Activated B cell treated with CpG ODN at 0.5 μM for 24 hours (primary cell): ENCODE measurements at regions of chr1 and their contacts with region 1.

Region 1: DNA sequence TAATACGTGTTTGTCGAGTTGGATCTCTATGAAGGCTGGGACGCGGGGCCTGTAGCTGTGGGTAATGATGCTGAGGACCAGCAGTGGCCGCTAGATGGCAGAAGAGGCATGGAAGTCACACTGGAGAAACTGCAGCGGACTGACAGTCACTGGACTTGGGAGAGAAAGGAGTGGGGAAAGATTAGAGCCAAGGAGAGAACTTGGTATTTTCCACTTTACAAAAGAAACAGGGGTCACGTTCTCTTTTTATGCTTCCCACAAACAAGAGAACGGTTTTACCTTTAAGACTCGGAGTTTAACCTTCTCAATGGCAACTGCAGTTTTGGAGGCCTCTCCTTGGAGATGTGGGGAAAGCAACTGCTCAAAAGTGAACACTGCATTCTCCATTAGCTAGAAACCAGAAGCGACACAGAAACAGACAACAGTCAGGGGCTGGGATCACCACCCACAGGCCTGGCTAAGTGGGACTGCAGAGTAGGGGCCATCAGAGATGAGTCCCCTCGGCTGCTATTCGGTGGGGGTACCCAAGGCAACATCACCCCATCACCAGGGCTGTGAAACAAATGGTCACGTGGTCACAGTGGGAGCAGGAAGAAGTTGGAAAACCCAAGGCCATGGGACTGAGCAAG is 51.1 kb upstream of the EDEM3 start:
- DNase-seq: peak; percentile 62
- ATAC-seq: peak; percentile 93
- H3K4me3 Mint-ChIP-seq: no peak overlapping the region
- H3K27ac Mint-ChIP-seq: peak overlapping the region; percentile 48
- H3K4me1 Mint-ChIP-seq: peaks cover 13% of the 10 kb centered on the region
- H3K27me3 Mint-ChIP-seq: no peaks in the 10 kb centered on the region
- CTCF ChIP-seq: peak; percentile 82

Region 2: DNA sequence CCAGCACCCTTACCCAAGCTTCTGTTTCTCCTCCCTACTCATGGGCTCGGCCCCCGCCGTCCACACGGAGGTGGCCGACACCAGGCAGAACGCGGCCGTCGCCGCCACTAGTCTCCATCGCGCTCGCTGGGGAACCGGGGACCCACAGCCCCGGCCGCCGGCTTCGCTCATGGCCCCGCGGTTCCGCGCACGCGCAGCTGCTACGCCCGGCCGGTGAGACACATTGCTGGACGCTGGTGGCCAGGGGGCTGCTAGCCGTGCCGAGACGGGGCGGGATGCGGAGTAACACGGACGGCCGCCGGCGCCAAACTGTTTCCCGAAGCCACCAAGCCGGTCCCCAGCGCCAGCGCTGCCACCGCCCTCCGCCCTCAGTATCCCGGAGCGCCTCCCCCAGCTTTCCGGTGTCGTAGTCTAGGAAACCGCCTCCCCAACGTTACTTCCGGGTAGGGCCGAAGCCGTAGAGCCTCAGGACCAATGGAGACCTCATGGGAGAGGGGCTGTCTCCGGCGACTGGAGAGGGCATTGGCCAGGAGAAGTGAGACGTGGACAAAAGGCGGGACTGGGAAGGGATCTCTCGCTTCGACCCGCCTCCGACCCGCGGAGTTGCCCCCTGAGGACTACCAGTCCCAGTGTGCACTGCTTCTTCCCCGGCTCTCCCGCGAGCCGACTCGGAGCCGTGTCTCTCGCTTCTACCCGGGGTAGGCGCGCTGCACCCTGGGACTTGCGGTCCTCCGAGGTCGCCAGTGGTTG is 51.1 kb before region 1 on chr1 and contains the start of gene EDEM3:
- CTCF ChIA-PET with region 1: no interaction called
- POLR2A ChIA-PET with region 1: no interaction called
- intact Hi-C with region 1: loop called (anchors 2 kb)
- DNase-seq: peak; percentile 90
- ATAC-seq: peak; percentile 95
- H3K4me3 Mint-ChIP-seq: peak within 1 kb of the TSS; percentile 95
- H3K27ac Mint-ChIP-seq: peak within 1 kb of the TSS; percentile 86
- H3K4me1 Mint-ChIP-seq: peaks cover 23% of the 10 kb centered on the region
- H3K27me3 Mint-ChIP-seq: peaks cover under 1% of the 10 kb centered on the region
- CTCF ChIP-seq: no peak
- total RNA-seq, gene EDEM3: 11.5 and 16.2 TPM in 2 replicates

Region 3: GRCh38 chr1:184973272-184974055 is 167.7 kb after region 1 on chr1:
- CTCF ChIA-PET with region 1: interaction called, 26 read pairs
- POLR2A ChIA-PET with region 1: interaction called, 17 read pairs
- intact Hi-C with region 1: no loop called
- DNase-seq: peak; percentile 61
- ATAC-seq: peak; percentile 51
- H3K4me3 Mint-ChIP-seq: peak overlapping the region; percentile 93
- H3K27ac Mint-ChIP-seq: peak overlapping the region; percentile 91
- H3K4me1 Mint-ChIP-seq: peaks cover 59% of the 10 kb centered on the region
- H3K27me3 Mint-ChIP-seq: peaks cover 2% of the 10 kb centered on the region
- CTCF ChIP-seq: no peak

Region 4: GRCh38 chr1:185170291-185170848 is 364.6 kb after region 1 on chr1:
- CTCF ChIA-PET with region 1: interaction called, 35 read pairs
- POLR2A ChIA-PET with region 1: no interaction called
- intact Hi-C with region 1: loop called (anchors 1 kb)
- DNase-seq: peak; percentile 30
- ATAC-seq: peak; percentile 83
- H3K4me3 Mint-ChIP-seq: peak overlapping the region; percentile 19
- H3K27ac Mint-ChIP-seq: no peak overlapping the region
- H3K4me1 Mint-ChIP-seq: peaks cover 8% of the 10 kb centered on the region
- H3K27me3 Mint-ChIP-seq: no peaks in the 10 kb centered on the region
- CTCF ChIP-seq: peak; percentile 82

Region 5: DNA sequence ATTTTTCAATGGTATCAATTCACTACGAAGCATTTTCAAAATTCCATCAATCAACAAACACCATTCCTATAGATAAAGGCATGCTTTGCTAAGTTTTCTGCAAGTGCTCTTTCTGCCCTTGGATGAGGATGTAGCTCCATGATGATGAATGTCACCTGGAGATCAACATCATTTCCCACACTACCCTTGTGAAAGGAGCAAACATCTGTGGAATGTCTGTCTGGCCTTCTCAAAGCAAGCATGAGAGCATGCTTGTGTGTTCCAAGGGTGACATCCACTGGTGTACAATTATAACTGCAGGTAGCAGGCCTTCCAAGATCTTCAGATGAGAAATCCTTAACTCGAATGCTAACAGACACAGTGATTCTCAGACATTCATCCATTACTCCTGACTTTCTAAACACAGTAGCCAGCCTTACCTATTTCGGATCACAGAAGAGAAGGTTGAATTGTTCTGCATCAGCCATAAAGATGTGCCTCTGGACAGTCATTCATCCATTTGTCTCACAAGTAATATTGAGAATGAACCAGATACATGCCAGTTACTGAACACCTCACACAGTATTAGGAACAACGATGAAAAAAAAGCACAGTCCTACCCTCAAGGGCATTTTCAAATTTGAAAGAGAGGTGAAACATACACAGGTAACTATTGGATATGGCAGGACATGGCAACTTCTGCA is 1406.9 kb after region 1 on chr1:
- CTCF ChIA-PET with region 1: no interaction called
- POLR2A ChIA-PET with region 1: no interaction called
- intact Hi-C with region 1: loop called (anchors 2 kb)
- DNase-seq: no peak
- ATAC-seq: no peak
- H3K4me3 Mint-ChIP-seq: no peak overlapping the region
- H3K27ac Mint-ChIP-seq: no peak overlapping the region
- H3K4me1 Mint-ChIP-seq: no peaks in the 10 kb centered on the region
- H3K27me3 Mint-ChIP-seq: no peaks in the 10 kb centered on the region
- CTCF ChIP-seq: no peak